ENCODE measurements at regions of chr7 and their contacts with region 1.

Region 1: GRCh38 chr7:35801392-35802101 is 690 bp downstream of the SEPTIN7 start:
- DNase-seq: peak; percentile 64
- H3K4me3 Mint-ChIP-seq: peak overlapping the region; percentile 98
- H3K27ac Mint-ChIP-seq: peak overlapping the region; percentile 95
- H3K4me1 Mint-ChIP-seq: peaks cover 47% of the 10 kb centered on the region
- H3K27me3 Mint-ChIP-seq: no peaks in the 10 kb centered on the region

Region 2: GRCh38 chr7:35353481-35353880 is 448.1 kb before region 1 on chr7:
- intact Hi-C with region 1: no loop called
- DNase-seq: no peak
- H3K4me3 Mint-ChIP-seq: no peak overlapping the region
- H3K27ac Mint-ChIP-seq: no peak overlapping the region
- H3K4me1 Mint-ChIP-seq: no peaks in the 10 kb centered on the region
- H3K27me3 Mint-ChIP-seq: no peaks in the 10 kb centered on the region

Region 3: GRCh38 chr7:35712563-35713226 is 88.9 kb before region 1 on chr7:
- intact Hi-C with region 1: no loop called
- DNase-seq: no peak
- H3K4me3 Mint-ChIP-seq: no peak overlapping the region
- H3K27ac Mint-ChIP-seq: no peak overlapping the region
- H3K4me1 Mint-ChIP-seq: peaks cover 17% of the 10 kb centered on the region
- H3K27me3 Mint-ChIP-seq: peaks cover 22% of the 10 kb centered on the region

Region 4: GRCh38 chr7:35723011-35723410 is 78.5 kb before region 1 on chr7:
- intact Hi-C with region 1: loop called (anchors 1 kb)
- DNase-seq: no peak
- H3K4me3 Mint-ChIP-seq: peak overlapping the region; percentile 24
- H3K27ac Mint-ChIP-seq: peak overlapping the region; percentile 56
- H3K4me1 Mint-ChIP-seq: peaks cover 49% of the 10 kb centered on the region
- H3K27me3 Mint-ChIP-seq: peaks cover 6% of the 10 kb centered on the region

Region 5: DNA sequence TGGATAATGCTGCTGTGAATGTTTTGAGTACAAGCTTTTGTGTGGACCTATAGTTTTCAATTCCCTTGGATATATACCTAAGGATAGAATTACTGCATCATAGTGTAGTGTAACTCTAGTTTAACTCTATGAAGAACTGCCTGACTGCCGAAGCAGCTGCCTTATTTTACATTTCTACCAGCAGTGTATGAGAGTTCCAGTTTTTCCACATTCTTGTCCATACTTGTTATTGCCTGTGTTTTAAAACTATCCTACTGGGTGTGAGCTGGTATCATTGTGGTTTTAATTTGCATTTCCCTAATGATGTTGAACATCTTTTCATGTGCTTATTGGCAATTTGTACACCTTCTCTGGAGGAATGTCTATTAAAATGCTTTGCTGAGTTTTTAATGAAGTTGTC is 15.0 kb after region 1 on chr7:
- intact Hi-C with region 1: loop called (anchors 1 kb)
- DNase-seq: no peak
- H3K4me3 Mint-ChIP-seq: no peak overlapping the region
- H3K27ac Mint-ChIP-seq: no peak overlapping the region
- H3K4me1 Mint-ChIP-seq: peaks cover 61% of the 10 kb centered on the region
- H3K27me3 Mint-ChIP-seq: no peaks in the 10 kb centered on the region

Region 6: GRCh38 chr7:35869810-35870209 is 68.3 kb after region 1 on chr7:
- intact Hi-C with region 1: loop called (anchors 5 kb)
- DNase-seq: no peak
- H3K4me3 Mint-ChIP-seq: no peak overlapping the region
- H3K27ac Mint-ChIP-seq: no peak overlapping the region
- H3K4me1 Mint-ChIP-seq: peaks cover 23% of the 10 kb centered on the region
- H3K27me3 Mint-ChIP-seq: no peaks in the 10 kb centered on the region

Region 7: DNA sequence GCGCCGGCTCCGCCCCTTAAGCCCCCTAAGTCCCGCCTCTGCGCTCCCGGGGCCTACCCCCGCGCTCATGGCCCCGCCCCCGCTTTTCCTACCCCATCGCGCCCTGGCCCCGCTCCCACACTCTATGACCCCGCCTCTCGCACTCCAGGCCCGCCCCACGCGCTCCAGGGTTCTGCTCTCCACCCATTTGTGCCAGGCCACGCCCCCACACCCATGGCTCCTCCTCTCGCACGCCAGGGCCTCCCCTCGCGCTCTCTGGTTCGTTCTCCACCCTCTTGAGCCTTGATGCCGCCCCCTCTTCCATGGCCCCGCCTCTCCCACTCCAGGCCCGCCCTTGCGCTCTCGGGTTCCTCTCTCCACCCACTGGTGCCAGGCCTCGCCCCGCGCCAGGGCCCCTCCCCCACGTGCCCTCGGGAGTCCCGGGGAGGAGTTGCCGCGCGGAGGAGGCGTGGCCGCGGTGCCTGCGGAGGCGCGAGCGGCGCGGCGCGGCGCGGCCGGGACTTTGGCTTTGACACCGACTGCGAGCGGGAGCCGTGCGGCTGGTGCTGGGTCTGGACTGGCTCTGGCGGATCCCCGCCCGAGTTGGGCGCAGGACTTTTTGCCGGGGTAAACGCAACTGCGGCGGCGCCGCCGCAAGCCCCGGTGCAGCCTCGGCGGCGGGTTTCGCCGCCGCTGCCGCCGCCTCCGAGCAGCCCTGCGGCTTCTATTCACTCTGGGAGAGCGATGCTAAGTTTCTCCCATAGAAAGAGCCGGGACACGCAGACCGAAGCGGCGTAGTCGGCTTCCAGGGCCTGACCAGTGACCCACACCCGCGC is 351.4 kb after region 1 on chr7 and contains the start of gene EEPD1:
- intact Hi-C with region 1: loop called (anchors 1 kb)
- DNase-seq: peak; percentile 99
- H3K4me3 Mint-ChIP-seq: peak within 1 kb of the TSS; percentile 78
- H3K27ac Mint-ChIP-seq: no peak within 1 kb of the TSS
- H3K4me1 Mint-ChIP-seq: peaks cover 13% of the 10 kb centered on the region
- H3K27me3 Mint-ChIP-seq: peaks cover 12% of the 10 kb centered on the region
- total RNA-seq, gene EEPD1: 0.91 and 1.5 TPM in 2 replicates

Region 8: GRCh38 chr7:36389371-36390198 is 588.0 kb after region 1 on chr7 and contains the start of gene ANLN:
- intact Hi-C with region 1: loop called (anchors 1 kb)
- DNase-seq: peak; percentile 84
- H3K4me3 Mint-ChIP-seq: peak within 1 kb of the TSS; percentile 86
- H3K27ac Mint-ChIP-seq: peak within 1 kb of the TSS; percentile 78
- H3K4me1 Mint-ChIP-seq: peaks cover 37% of the 10 kb centered on the region
- H3K27me3 Mint-ChIP-seq: peaks cover 12% of the 10 kb centered on the region
- total RNA-seq, gene ANLN: 23.8 and 31.0 TPM in 2 replicates